ENCODE measurements at regions of chr18 and their contacts with region 1.

Region 1: GRCh38 chr18:22703883-22704585 is 229.1 kb upstream of the RBBP8 start:
- DNase-seq: peak; percentile 61
- H3K4me3 Mint-ChIP-seq: no peak overlapping the region
- H3K27ac Mint-ChIP-seq: no peak overlapping the region
- H3K4me1 Mint-ChIP-seq: no peaks in the 10 kb centered on the region
- H3K27me3 Mint-ChIP-seq: peaks cover 4% of the 10 kb centered on the region

Region 2: DNA sequence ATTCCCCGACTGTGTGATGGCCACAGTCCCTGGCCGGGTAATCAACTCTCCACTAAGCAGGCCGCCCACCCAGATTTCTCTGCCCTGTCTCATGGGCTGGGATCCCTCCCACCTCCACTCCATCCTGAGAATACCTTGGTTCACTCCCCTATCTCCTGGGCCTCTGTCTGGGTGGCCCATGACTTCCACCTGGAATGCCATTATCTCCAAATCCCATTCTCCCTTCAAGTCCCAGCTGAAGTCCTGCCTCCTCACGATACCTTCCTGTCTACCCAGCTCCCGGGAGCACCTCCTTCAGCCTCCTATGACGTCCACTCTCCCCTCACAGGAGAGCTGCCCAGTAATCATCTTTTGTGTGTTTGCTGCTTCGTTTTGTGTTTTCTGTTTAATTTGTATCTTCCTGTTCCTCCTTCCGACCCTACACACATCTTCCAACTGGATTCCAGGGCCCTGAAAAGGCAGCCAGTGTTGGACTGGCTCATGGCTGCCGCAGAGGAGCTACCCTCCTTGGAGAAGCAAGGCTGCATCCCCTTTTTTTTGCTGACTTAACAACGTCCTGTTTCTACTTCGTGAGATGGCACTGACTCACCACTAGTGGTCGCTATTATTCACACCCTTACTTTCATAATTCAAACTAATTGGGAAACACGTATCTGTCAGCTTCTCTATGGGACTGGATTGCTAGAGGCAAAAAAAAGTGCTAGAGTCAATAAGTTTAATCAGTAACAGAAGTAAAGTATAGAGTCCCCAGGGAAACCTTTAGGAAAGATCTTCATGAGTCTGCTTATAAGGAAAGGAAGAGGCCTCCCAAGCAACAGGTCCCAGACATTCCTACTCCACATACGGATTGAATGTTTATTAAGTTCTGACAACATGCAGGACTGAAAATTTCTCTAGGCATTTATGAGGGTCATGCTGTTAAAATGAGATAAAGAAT is 706.6 kb before region 1 on chr18:
- intact Hi-C with region 1: loop called (anchors 10 kb)
- DNase-seq: peak; percentile 65
- H3K4me3 Mint-ChIP-seq: no peak overlapping the region
- H3K27ac Mint-ChIP-seq: no peak overlapping the region
- H3K4me1 Mint-ChIP-seq: peaks cover 2% of the 10 kb centered on the region
- H3K27me3 Mint-ChIP-seq: no peaks in the 10 kb centered on the region

Region 3: GRCh38 chr18:22170421-22171262 is 533.4 kb before region 1 on chr18:
- intact Hi-C with region 1: no loop called
- DNase-seq: peak; percentile 62
- H3K4me3 Mint-ChIP-seq: peak overlapping the region; percentile 88
- H3K27ac Mint-ChIP-seq: peak overlapping the region; percentile 77
- H3K4me1 Mint-ChIP-seq: peaks cover 17% of the 10 kb centered on the region
- H3K27me3 Mint-ChIP-seq: peaks cover 80% of the 10 kb centered on the region

Region 4: DNA sequence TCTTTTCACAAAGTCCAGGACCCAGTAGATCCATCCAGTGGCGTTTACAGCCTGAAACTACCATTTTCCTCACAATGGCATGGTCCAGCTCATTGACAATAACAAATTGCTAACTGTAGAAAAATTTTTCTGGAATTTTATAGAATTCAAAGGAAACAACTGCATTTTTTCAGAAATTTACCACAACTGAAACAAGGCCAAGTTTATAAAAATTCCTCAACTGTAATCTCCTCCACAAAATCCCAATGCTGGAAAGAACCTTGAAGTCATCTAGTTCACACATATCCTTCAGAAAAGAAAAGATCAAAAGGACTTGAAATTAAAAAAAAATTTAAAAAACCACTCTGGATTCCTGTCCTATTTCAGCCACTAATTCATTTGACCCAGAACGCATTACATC is 60.3 kb before region 1 on chr18:
- intact Hi-C with region 1: no loop called
- DNase-seq: no peak
- H3K4me3 Mint-ChIP-seq: no peak overlapping the region
- H3K27ac Mint-ChIP-seq: no peak overlapping the region
- H3K4me1 Mint-ChIP-seq: no peaks in the 10 kb centered on the region
- H3K27me3 Mint-ChIP-seq: no peaks in the 10 kb centered on the region

Measured in activated CD4-positive, alpha-beta T cell treated with anti-CD3 and anti-CD28 coated beads, Interleukin-2, amount 10 ng/mL, durations not matched to agents 24 days and 14 days (primary cell).